AG04450 (cell line): ENCODE measurements at regions of chr2 and their contacts with region 1.

Region 1: DNA sequence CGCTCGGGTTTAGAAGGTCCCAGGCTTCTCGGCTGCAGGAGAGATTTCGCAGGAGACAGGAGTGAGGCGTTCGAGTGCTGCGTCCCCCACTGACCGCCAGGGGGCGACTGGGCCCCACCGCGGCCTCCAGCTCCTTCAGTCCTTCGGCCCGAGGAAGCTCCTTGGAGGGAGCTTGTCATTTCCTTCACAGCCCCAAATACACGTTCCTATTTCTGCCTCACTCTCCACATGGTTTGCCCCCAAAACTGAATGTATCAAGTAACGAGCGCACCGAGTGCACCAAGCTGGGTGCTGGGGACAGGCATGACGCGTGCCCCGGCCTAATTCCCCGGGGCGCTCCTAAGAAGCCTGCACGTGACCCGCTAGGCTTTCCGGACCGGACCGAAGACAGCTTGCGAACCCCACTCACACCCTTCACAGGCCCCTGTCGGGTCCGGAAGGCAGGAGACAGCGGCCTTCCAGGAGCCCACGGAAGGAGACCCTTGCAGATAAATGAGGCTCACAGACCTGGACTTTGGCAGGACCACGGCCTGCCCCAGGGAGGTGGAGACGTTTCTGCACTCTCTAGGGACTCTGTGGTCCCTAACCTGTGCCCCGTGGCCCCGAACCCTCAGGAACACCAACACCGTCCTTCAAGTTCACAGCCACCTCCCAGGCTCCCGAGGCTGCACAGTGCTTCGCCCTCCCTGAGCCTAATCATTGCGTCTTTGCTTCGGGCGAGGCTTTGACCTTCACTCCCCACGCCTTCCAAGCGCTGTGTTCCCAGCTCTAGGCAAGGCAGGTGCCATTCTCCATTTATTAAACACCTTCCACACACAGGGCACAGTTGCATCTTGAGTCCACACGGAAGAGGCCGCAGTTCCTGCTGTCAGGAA is 13.0 kb upstream of the FAHD2A start:
- DNase-seq: peak; percentile 20
- H3K4me3 ChIP-seq: no peak overlapping the region
- H3K27ac ChIP-seq: no peak overlapping the region
- H3K27me3 ChIP-seq: peaks cover 8% of the 10 kb centered on the region
- CTCF ChIP-seq: peak; percentile 98

Region 2: GRCh38 chr2:95076784-95077529 is 312.5 kb before region 1 on chr2:
- CTCF ChIA-PET with region 1: no interaction called
- POLR2A ChIA-PET with region 1: no interaction called
- DNase-seq: no peak
- H3K4me3 ChIP-seq: peak overlapping the region; percentile 58
- H3K27ac ChIP-seq: no peak overlapping the region
- H3K27me3 ChIP-seq: peaks cover 20% of the 10 kb centered on the region
- CTCF ChIP-seq: peak; percentile 88

Region 3: DNA sequence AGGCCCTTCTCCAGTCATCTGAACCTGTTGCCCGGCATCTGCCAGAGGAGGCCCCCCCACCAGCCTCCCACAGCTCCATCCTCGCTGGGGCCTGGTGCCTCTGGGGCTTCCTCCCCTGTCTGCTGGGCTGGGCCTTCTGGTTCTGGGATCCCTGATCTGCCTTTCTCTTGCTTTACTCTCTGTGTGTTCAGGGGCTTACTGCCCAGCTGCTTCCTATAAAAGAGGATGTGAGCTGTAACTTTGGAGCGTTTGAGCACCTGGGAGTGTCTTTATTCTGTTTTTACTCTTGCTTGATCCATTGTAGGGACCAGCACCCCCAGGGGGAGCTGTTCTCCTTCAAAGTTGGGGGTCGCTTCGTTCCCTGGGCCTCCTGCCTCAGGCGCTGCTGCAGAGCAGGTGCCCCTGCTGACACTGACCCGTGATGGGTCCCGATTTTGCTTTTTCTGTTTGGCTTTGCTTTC is 10.1 kb before region 1 on chr2:
- CTCF ChIA-PET with region 1: interaction called, 15 read pairs
- POLR2A ChIA-PET with region 1: no interaction called
- DNase-seq: no peak
- H3K4me3 ChIP-seq: no peak overlapping the region
- H3K27ac ChIP-seq: no peak overlapping the region
- H3K27me3 ChIP-seq: peaks cover 2% of the 10 kb centered on the region
- CTCF ChIP-seq: no peak; the same call in 1 of the 2 replicates

Region 4: DNA sequence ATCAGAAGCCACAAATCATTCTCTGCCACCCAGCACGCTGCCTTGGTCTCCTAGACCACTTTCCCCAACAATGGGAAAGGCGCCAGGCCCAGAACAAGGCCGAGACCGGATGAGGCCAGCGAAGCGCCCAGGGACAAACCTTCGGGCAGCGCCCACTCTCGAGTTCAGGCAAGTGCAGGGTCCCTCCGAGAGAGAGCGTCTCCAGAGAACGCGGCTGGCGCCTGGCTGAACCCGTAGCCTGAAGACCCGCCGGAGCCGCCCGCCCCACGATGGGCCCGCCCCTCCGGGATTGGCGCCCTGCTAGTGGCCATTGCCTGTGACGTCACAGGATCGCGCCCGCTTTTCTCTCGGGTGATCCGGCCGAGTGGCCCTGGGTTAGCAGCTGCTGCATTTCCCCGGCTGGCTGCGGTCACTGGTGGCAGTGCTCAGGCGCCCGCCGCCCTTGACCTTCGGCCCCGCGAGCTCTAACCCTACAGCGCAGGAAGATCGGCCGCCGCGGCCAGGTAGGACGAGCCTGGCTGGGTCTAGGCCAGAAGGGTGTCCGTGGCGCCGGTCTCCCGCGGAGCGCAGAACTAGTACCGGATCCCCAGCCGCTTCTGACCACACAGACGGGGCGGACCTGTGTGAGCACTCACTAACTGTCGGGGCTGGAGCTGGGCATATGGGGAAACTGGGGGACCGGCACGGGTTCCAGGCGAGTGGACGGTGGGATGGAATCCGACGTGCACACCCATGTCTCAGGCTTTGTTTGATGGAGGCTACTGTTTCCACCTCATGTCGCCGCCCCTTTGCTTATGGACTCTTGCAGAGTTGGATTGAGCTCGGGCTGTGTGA is 13.1 kb after region 1 on chr2 and contains the start of gene FAHD2A:
- CTCF ChIA-PET with region 1: interaction called, 45 read pairs
- POLR2A ChIA-PET with region 1: no interaction called
- DNase-seq: peak; percentile 52
- H3K4me3 ChIP-seq: peak within 1 kb of the TSS; percentile 97
- H3K27ac ChIP-seq: peak within 1 kb of the TSS; percentile 65
- H3K27me3 ChIP-seq: no peaks in the 10 kb centered on the region
- CTCF ChIP-seq: no peak
- polyA plus RNA-seq, gene FAHD2A: 24.9 and 30.9 TPM in 2 replicates

Region 5: DNA sequence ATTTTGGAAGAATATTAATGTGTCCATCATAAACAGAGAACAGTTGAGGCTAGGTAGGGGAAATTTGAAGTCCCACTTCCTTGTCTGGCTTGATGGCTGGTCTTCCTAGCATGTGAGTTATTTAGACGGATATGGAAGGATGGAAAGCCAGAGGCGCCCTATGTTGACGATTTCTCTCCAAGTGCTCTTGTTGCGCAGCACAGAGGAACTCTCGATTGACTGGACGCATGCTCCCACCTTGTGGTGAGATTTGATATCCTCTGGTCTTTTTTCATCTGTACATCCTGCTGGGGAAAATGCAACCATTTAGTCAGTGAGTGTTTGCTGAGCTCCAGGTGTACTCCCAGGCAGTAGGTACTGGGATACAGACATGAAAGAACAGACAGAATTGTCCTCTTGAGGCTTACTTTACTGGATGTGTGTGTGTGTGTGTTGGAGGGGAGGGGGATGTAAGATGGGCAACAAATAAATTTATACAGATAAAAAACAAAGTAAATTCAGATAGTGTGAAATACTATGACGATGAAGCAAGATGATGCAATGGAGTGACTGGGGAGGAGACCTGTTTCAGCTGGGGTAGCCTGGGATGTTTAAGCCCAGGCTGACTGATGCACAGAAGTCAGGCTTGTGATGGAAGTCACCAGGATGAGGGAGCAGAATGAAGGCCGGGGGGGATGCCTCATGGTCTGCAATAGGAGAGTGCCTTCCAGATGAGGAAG is 339.6 kb after region 1 on chr2:
- CTCF ChIA-PET with region 1: interaction called, 10 read pairs
- POLR2A ChIA-PET with region 1: no interaction called
- DNase-seq: peak; percentile 79
- H3K4me3 ChIP-seq: no peak overlapping the region
- H3K27ac ChIP-seq: no peak overlapping the region
- H3K27me3 ChIP-seq: no peaks in the 10 kb centered on the region
- CTCF ChIP-seq: peak; percentile 74